A549 (cell line): ENCODE measurements at regions of chr20 and their contacts with region 1.

Region 1: DNA sequence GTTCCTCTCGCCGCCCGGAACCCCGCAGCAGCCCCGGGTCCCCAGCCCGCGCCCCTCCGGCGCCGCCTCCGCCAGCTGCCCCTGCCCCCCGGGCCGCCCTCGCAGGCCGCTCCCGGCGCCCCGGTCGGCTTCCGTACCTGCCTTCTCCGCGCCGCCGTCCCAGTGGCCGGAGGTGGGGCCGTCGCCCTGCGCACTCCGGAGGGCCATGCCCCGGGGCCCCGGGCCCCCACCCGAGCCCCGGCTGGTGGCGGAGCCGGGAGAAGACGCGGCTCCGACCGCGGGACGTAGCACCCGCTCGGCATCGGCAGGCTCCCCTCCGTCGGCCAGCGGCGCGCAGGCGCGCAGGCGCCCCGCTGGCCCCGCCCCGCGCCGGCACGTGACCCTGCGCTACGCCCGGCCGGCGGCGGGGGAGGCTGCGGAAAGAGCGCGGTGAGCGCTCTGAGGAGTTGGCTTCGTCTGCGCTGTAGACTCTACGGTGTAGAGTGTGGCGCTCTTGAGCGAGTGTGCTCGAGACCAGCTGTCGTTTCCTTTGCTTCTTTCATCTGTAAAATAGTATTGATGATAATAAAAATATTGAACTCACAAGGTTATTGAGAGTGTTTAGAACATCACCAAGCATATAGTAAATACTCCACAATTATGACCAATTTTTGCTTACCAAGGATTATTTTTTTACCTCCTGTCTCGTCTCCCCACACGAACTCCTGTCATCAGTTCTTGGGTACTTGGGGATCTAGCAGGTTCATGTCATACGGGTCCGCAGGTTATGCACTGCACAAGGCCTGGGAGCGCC is at the start of gene TBC1D20:
- DNase-seq: peak; percentile 89 to 92
- ATAC-seq: peak; percentile 94 to 96
- H3K4me3 ChIP-seq: peak within 1 kb of the TSS; percentile 82
- H3K27ac ChIP-seq: peak within 1 kb of the TSS; percentile 91 to 92
- H3K4me1 ChIP-seq: peaks cover 25% of the 10 kb centered on the region
- CTCF ChIP-seq: peak; percentile 58
- EP300 ChIP-seq: no peak
- POLR2A ChIP-seq: peak; percentile 94
- RAD21 ChIP-seq: peak in 1 of 2 experiments; percentile 29; a peak in 1 of 5 replicates
- polyA plus RNA-seq, gene TBC1D20: 43.4 and 53.9 TPM in 2 replicates

Region 2: DNA sequence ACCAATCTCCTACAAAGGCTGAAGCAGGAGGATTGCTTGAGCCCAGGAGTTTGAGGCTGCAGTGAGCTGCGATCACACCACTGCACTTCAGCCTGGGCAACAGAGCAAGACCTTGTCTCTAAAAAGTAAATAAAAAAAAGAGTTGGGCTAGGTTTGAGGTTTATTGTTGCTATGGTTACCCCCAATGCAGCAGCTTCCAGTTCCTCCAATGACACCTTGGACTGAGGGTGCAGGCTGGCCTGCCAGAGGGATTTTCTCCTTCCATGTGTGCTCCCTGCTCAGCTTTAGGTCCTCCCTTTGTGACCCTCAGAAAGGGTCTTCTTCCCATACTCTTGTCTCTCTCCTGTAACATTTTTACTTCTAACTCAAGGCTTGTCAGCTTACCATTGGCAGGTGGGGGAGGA is 10.5 kb after region 1 on chr20:
- CTCF ChIA-PET with region 1: interaction called, 22 read pairs
- POLR2A ChIA-PET with region 1: interaction called, 3 read pairs
- DNase-seq: no peak
- ATAC-seq: peak; percentile 26 to 54; a peak in 3 of 6 replicates
- H3K4me3 ChIP-seq: no peak overlapping the region
- H3K27ac ChIP-seq: no peak overlapping the region
- H3K4me1 ChIP-seq: no peaks in the 10 kb centered on the region
- CTCF ChIP-seq: no peak
- EP300 ChIP-seq: no peak
- POLR2A ChIP-seq: no peak
- RAD21 ChIP-seq: no peak

Region 3: GRCh38 chr20:478949-479429 is 16.6 kb after region 1 on chr20:
- CTCF ChIA-PET with region 1: interaction called, 22 read pairs
- POLR2A ChIA-PET with region 1: interaction called, 3 read pairs
- DNase-seq: peak; percentile 71 to 76
- ATAC-seq: peak; percentile 73 to 81
- H3K4me3 ChIP-seq: no peak overlapping the region
- H3K27ac ChIP-seq: peak overlapping the region in 1 of 2 experiments; percentile 43; a peak in 2 of 6 replicates
- H3K4me1 ChIP-seq: peaks cover 10% of the 10 kb centered on the region; the same call in 2 of the 3 replicates
- CTCF ChIP-seq: peak; percentile 86
- EP300 ChIP-seq: no peak
- POLR2A ChIP-seq: no peak
- RAD21 ChIP-seq: peak; percentile 70 to 71